Colonic mucosa (tissue), 4 donors: ENCODE measurements at regions of chr9 and their contacts with region 1.

Region 1: GRCh38 chr9:71604197-71605063 is 163.9 kb downstream of the CEMIP2 start:
- DNase-seq: peak; percentile 85
- H3K4me3 ChIP-seq: no peak overlapping the region
- H3K27ac ChIP-seq: no peak overlapping the region
- H3K4me1 ChIP-seq: no peaks in the 10 kb centered on the region
- H3K27me3 ChIP-seq: no peaks in the 10 kb centered on the region
- CTCF ChIP-seq: peak; percentile 74

Region 2: DNA sequence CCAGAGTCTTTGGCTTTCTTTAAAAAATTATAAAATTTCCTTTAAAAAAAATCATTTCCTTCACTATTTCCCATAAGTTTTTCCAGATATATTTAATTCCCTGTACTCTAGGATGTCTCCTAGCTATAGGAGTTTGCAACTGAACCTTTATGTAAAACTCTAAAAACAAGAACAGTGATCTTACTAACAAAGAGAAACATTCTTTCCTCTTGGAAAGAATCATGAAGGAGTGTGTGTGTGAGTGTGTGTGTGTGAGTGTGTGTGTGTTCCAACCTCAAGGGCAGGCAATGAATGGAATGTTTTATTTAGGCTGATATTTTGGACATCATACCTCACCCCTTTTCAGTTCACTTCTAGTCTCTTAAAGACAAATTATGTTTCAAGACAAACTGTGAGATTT is 145.3 kb before region 1 on chr9:
- intact Hi-C with region 1: no loop called
- DNase-seq: no peak
- H3K4me3 ChIP-seq: no peak overlapping the region
- H3K27ac ChIP-seq: no peak overlapping the region
- H3K4me1 ChIP-seq: no peaks in the 10 kb centered on the region
- H3K27me3 ChIP-seq: no peaks in the 10 kb centered on the region
- CTCF ChIP-seq: no peak

Region 3: GRCh38 chr9:71675129-71675856 is 70.9 kb after region 1 on chr9:
- intact Hi-C with region 1: no loop called
- DNase-seq: peak; percentile 47
- H3K4me3 ChIP-seq: no peak overlapping the region
- H3K27ac ChIP-seq: peak overlapping the region; percentile 29
- H3K4me1 ChIP-seq: peaks cover 5% of the 10 kb centered on the region
- H3K27me3 ChIP-seq: no peaks in the 10 kb centered on the region
- CTCF ChIP-seq: no peak

Region 4: DNA sequence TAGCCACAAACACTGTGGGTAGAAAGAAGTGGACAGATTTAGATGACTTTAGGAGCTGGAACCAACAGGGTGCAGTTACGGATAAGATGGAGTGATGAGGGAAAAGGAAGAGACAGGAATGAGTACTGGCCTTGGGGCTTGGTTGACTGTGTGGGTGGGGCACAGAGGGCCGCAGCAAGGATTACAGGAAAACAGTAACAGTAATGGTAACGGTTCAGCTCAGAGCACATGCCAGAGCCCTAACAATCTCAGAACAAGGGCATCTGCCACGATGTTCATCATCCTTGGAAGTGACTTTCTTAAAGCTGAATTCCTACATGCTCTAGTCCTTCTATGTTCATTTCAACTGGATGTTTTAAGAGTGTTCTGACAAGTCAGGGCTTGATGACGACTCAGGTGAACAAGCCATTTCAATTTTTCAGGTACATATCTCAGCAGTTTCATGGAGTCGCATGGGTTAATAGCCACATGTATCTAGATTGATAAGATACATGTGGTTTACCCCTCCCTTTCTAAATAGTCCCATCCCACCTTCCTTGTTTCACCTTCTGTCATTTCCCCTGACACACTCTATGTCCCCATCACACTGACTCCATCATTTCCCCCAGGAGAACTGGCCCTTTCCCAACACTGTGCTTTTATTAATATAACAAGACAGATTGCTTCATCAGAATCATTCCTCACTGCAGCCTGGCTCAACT is 98.9 kb after region 1 on chr9:
- intact Hi-C with region 1: loop called (anchors 10 kb)
- DNase-seq: no peak
- H3K4me3 ChIP-seq: no peak overlapping the region
- H3K27ac ChIP-seq: no peak overlapping the region
- H3K4me1 ChIP-seq: no peaks in the 10 kb centered on the region
- H3K27me3 ChIP-seq: no peaks in the 10 kb centered on the region
- CTCF ChIP-seq: no peak

Region 5: DNA sequence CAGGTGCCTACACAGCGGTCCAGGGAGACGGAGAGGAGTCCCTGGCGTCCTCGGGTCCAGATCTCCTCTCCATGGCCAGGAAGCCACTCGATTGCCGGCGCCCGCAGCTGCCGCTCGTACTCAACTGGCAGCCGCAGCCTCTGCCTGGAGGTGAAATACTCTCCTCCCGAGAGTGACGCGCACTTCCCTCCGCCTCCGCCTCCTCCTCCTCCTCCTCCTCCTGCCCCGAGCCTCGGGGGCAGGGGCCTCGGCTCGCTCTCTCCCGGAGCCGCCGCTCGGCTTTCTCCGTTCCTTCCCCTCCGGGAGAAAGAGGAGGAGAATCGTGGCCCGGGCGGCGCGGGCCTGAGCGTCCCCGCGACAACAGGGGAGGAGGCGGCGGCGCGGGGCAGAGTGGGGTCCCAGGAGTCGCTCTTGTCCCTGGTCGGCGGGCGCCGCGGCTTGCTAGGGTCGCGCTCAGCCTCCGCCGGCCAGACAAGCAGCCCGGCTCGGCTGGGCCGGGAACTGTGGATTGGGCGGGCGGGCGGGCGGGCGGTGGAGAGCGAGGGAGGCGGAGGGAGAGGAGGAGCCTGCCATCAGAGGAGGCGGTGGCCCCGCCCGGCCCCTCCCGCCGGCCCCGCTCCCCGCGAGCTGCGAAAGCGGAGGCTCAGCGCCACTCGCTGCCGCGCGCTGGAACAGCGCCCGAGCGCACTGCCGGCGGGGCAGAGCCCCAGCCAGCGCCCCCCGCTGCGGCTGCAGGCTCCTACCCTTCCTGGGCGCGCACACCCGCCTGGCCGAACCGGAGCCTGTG is 164.2 kb after region 1 on chr9 and contains the start of gene CEMIP2:
- intact Hi-C with region 1: loop called (anchors 2 kb)
- DNase-seq: peak; percentile 91
- H3K4me3 ChIP-seq: peak within 1 kb of the TSS; percentile 82
- H3K27ac ChIP-seq: peak within 1 kb of the TSS; percentile 98
- H3K4me1 ChIP-seq: peaks cover 6% of the 10 kb centered on the region
- H3K27me3 ChIP-seq: no peaks in the 10 kb centered on the region
- CTCF ChIP-seq: no peak
- total RNA-seq, gene CEMIP2: 72.7 to 111 TPM